ENCODE measurements at regions of chr5 and their contacts with region 1.

Region 1: DNA sequence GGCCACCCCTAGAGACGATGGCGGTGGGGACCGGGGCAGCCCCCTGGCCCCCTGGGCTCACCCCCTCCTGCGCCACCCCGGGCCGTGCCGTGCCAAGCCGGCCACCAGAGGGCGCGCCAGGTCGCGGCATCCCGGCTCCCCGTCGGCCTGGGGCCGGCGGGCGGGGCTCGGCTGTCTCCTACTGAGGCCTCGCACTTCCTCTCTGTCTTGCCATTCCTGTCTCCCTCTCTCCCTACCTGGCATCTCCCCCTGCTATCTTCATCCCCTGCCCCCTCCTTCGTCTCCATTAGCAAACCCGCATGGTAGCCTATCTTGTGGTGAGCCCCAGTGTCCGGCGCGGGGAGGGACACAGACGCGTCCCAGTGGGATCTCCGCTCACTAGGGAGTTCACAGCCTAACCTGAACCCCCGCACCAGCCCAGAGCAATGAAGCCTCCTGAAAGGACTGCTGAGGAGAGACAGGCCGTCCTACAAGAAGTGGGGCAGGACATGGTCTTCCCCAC is 29.8 kb upstream of the FABP6 start:
- DNase-seq: peak; percentile 46
- H3K4me3 ChIP-seq: peak overlapping the region; percentile 25 to 28
- H3K27ac ChIP-seq: no peak overlapping the region
- H3K4me1 ChIP-seq: no peaks in the 10 kb centered on the region
- H3K27me3 ChIP-seq: no peaks in the 10 kb centered on the region
- CTCF ChIP-seq: peak; percentile 90 to 96 (median 92)
- POLR2A ChIP-seq: no peak

Region 2: DNA sequence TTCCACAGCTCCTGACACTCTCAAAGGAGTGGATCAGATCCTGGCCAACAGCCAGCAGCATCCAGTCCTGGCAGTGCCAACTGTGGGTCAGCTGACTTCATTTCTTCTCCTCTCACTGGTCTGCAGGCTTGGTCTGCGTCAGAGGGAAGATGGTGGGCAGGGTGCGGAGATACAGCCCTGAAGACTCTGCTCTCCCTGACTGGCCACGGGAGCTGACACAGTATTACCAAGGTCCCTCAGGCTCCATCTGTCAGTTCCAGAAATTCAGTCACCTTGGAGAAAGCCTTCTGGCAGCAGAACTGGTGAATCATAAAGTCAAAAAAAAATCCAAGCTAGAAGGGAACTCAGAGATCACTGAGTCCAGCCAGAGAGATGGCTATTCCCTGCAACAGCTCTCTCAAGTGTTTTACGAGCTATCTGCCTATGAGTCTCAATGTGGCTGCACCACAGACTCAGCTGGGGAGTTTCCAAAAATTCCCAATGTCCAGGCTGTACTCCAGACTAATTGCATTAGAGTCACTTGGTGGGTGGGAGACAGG is 143.0 kb after region 1 on chr5:
- intact Hi-C with region 1: loop called (anchors 2 kb)
- DNase-seq: no peak
- H3K4me3 ChIP-seq: no peak overlapping the region
- H3K27ac ChIP-seq: no peak overlapping the region
- H3K4me1 ChIP-seq: no peaks in the 10 kb centered on the region
- H3K27me3 ChIP-seq: no peaks in the 10 kb centered on the region
- CTCF ChIP-seq: no peak
- POLR2A ChIP-seq: no peak